Sciatic nerve (tissue), 2 donors: ENCODE measurements at regions of chr7 and their contacts with region 1.

Region 1: GRCh38 chr7:134946260-134946659 is 40.0 kb upstream of the AGBL3 start:
- DNase-seq: no peak
- ATAC-seq: no peak

Region 2: DNA sequence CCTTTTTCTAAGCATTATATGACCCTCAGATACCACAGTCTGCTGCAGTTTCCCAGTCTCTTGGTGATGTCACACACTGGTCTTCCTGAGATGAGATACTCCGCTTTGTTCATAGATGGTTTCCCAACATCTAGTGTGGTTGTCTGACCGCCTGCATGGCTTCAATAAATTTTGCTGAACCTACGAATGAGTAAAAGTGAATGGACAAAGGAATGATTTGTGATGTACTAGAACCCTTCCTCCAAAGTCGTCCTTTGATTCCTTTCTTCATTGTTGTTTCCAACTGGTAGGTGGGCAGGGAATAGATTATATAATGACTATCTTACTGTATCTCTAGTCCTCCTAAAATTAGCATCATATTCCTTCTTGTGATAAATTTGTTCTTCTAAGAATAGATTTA is 712.0 kb before region 1 on chr7:
- intact Hi-C with region 1: no loop called
- DNase-seq: no peak
- ATAC-seq: no peak

Region 3: DNA sequence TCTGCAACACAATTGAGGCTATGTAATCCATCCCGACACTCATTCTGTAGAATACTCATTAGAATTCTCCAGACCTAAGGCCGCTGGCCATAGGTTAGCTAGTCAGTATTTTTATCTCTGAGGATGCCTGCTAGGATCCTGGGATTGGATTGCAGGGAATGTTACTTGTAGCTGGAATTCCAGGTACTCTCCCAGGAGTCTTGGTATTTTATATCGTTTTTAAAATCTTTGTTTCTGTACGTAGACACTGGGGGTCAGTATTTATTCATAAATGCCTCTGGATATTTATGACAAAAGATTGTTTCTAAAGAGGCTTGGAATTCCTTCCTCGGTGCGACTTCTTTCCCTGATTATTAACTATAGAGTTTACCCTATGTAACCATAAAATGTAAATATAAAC is 259.5 kb before region 1 on chr7:
- intact Hi-C with region 1: loop called (anchors 5 kb)
- DNase-seq: no peak
- ATAC-seq: no peak

Region 4: GRCh38 chr7:135129580-135129979 is 183.3 kb after region 1 on chr7:
- intact Hi-C with region 1: no loop called
- DNase-seq: no peak
- ATAC-seq: no peak